ENCODE measurements at regions of chr17 and their contacts with region 1.

Region 1: GRCh38 chr17:716238-716637 is 1.6 kb upstream of the VPS53 start:
- DNase-seq: no peak
- ATAC-seq: no peak
- H3K4me3 ChIP-seq: no peak overlapping the region
- H3K4me3 Mint-ChIP-seq: peak overlapping the region in 4 of 10 donors; percentile 35 to 80 (median 60)
- H3K27ac ChIP-seq: no peak overlapping the region
- H3K27ac Mint-ChIP-seq: no peak overlapping the region
- H3K4me1 ChIP-seq: peaks cover 10 to 12% of the 10 kb centered on the region in 2 donors
- H3K4me1 Mint-ChIP-seq: peaks cover 21 to 35% (median 28%) of the 10 kb centered on the region in 7 donors
- H3K27me3 ChIP-seq: no peaks in the 10 kb centered on the region
- H3K27me3 Mint-ChIP-seq: peaks cover 0 to 2% (median 0%) of the 10 kb centered on the region in 5 donors

Region 2: GRCh38 chr17:640436-640835 is 75.8 kb before region 1 on chr17:
- CTCF ChIA-PET with region 1: no interaction called
- POLR2A ChIA-PET with region 1: no interaction called
- intact Hi-C with region 1: no loop called
- DNase-seq: no peak
- ATAC-seq: peak; percentile 89
- H3K4me3 ChIP-seq: no peak overlapping the region
- H3K4me3 Mint-ChIP-seq: no peak overlapping the region
- H3K27ac ChIP-seq: no peak overlapping the region
- H3K27ac Mint-ChIP-seq: peak overlapping the region in 1 of 9 donors; percentile 11
- H3K4me1 ChIP-seq: no peaks in the 10 kb centered on the region
- H3K4me1 Mint-ChIP-seq: peaks cover 0 to 11% (median 3%) of the 10 kb centered on the region in 7 donors
- H3K27me3 ChIP-seq: no peaks in the 10 kb centered on the region
- H3K27me3 Mint-ChIP-seq: no peaks in the 10 kb centered on the region

Region 3: GRCh38 chr17:752002-752619 is 35.9 kb after region 1 on chr17 and contains the start of gene GEMIN4:
- CTCF ChIA-PET with region 1: interaction called, 3 read pairs
- POLR2A ChIA-PET with region 1: interaction called, 22 read pairs
- intact Hi-C with region 1: loop called (anchors 1 kb)
- DNase-seq: peak; percentile 92 to 100 (median 98)
- ATAC-seq: peak; percentile 96
- H3K4me3 ChIP-seq: peak within 1 kb of the TSS; percentile 80
- H3K4me3 Mint-ChIP-seq: peak within 1 kb of the TSS; percentile 90 to 97 (median 96)
- H3K27ac ChIP-seq: peak within 1 kb of the TSS; percentile 81
- H3K27ac Mint-ChIP-seq: peak within 1 kb of the TSS; percentile 88 to 98 (median 96)
- H3K4me1 ChIP-seq: peaks cover 15 to 22% of the 10 kb centered on the region in 2 donors
- H3K4me1 Mint-ChIP-seq: peaks cover 32 to 43% (median 40%) of the 10 kb centered on the region in 7 donors
- H3K27me3 ChIP-seq: no peaks in the 10 kb centered on the region
- H3K27me3 Mint-ChIP-seq: no peaks in the 10 kb centered on the region
- total RNA-seq, gene GEMIN4: 15.5 to 35.0 (median 28.9) TPM

Region 4: GRCh38 chr17:1216217-1217088 is 500.2 kb after region 1 on chr17:
- CTCF ChIA-PET with region 1: no interaction called
- POLR2A ChIA-PET with region 1: no interaction called
- intact Hi-C with region 1: no loop called
- DNase-seq: no peak
- ATAC-seq: no peak
- H3K4me3 ChIP-seq: no peak overlapping the region
- H3K4me3 Mint-ChIP-seq: no peak overlapping the region
- H3K27ac ChIP-seq: no peak overlapping the region
- H3K27ac Mint-ChIP-seq: no peak overlapping the region
- H3K4me1 ChIP-seq: no peaks in the 10 kb centered on the region
- H3K4me1 Mint-ChIP-seq: peaks cover 0 to 3% (median 0%) of the 10 kb centered on the region in 7 donors
- H3K27me3 ChIP-seq: no peaks in the 10 kb centered on the region
- H3K27me3 Mint-ChIP-seq: peaks cover 0 to 13% (median 5%) of the 10 kb centered on the region in 5 donors